CD8-positive, alpha-beta memory T cell (primary cell): ENCODE measurements at regions of chr3 and their contacts with region 1.

Region 1: GRCh38 chr3:5122030-5122740 is at the start of gene ARL8B:
- DNase-seq: peak; percentile 85 to 92 (median 87)
- H3K4me3 ChIP-seq: peak within 1 kb of the TSS; percentile 61
- H3K4me3 Mint-ChIP-seq: peak within 1 kb of the TSS; percentile 81 to 95 (median 84)
- H3K27ac ChIP-seq: peak within 1 kb of the TSS; percentile 90
- H3K27ac Mint-ChIP-seq: peak within 1 kb of the TSS; percentile 78 to 98 (median 91)
- H3K4me1 ChIP-seq: peaks cover 43% of the 10 kb centered on the region
- H3K4me1 Mint-ChIP-seq: peaks cover 41 to 50% (median 48%) of the 10 kb centered on the region in 3 donors
- H3K27me3 ChIP-seq: no peaks in the 10 kb centered on the region
- H3K27me3 Mint-ChIP-seq: no peaks in the 10 kb centered on the region
- total RNA-seq, gene ARL8B: 64.5 to 66.9 TPM

Region 2: GRCh38 chr3:5138214-5138981 is 16.2 kb after region 1 on chr3:
- CTCF ChIA-PET with region 1: interaction called, 10 read pairs
- POLR2A ChIA-PET with region 1: no interaction called
- DNase-seq: no peak
- H3K4me3 ChIP-seq: no peak overlapping the region
- H3K4me3 Mint-ChIP-seq: no peak overlapping the region
- H3K27ac ChIP-seq: no peak overlapping the region
- H3K27ac Mint-ChIP-seq: peak overlapping the region in 7 of 8 donors; percentile 23 to 86 (median 82)
- H3K4me1 ChIP-seq: peaks cover 31% of the 10 kb centered on the region
- H3K4me1 Mint-ChIP-seq: peaks cover 66 to 85% (median 78%) of the 10 kb centered on the region in 3 donors
- H3K27me3 ChIP-seq: no peaks in the 10 kb centered on the region
- H3K27me3 Mint-ChIP-seq: no peaks in the 10 kb centered on the region

Region 3: DNA sequence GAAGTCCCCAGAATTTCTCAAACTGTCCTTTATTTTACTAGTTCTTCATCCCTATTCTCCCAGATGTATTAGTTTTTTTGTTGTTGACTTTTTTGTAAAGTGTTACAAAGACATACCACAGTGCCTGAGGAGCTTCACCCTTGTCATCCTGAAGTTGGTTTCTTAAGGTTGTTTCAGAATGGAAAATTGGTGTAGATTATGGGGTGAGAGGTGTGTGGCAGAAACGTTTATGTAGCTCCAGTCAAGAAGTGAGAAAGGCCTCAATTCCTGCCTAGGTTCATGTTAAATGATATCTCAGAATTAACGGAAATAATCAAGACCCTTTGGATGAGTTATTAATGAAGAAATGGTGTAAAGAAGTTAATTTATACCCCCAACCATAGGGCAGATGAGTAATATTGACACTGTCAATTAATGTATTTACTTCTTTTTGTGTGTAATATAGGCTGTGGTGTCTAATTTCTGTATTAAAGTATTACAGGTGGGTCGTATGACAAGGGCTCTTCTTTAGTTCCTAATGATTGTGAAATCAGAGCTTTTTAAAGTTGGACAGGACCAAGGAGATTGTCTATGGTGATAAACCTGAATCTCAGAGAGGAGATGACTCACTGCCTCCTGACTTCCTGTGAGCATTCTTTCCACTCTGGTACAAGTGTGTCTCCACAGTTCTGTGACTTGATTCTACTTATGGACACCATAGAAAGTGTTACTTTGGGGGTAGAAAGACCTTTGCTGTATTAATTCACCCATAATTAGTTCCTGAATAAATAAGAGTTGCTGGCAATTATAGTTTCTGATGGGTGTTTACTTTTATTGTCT is 72.4 kb after region 1 on chr3:
- CTCF ChIA-PET with region 1: interaction called, 13 read pairs
- POLR2A ChIA-PET with region 1: no interaction called
- DNase-seq: peak in 4 of 5 donors; percentile 15 to 60 (median 34)
- H3K4me3 ChIP-seq: no peak overlapping the region
- H3K4me3 Mint-ChIP-seq: peak overlapping the region; percentile 12 to 58 (median 29)
- H3K27ac ChIP-seq: peak overlapping the region; percentile 22
- H3K27ac Mint-ChIP-seq: peak overlapping the region; percentile 58 to 99 (median 88)
- H3K4me1 ChIP-seq: peaks cover 88% of the 10 kb centered on the region
- H3K4me1 Mint-ChIP-seq: peaks cover 86 to 92% (median 91%) of the 10 kb centered on the region in 3 donors
- H3K27me3 ChIP-seq: no peaks in the 10 kb centered on the region
- H3K27me3 Mint-ChIP-seq: no peaks in the 10 kb centered on the region